Activated CD8-positive, alpha-beta T cell treated with anti-CD3 and anti-CD28 coated beads for 36 hours (primary cell): ENCODE measurements at regions of chr22 and their contacts with region 1.

Region 1: GRCh38 chr22:40509401-40510134 is 127.0 kb downstream of the MRTFA start:
- DNase-seq: no peak
- ATAC-seq: no peak
- H3K4me3 Mint-ChIP-seq: no peak overlapping the region
- H3K27ac Mint-ChIP-seq: no peak overlapping the region
- H3K4me1 Mint-ChIP-seq: peaks cover 31% of the 10 kb centered on the region
- H3K27me3 Mint-ChIP-seq: no peaks in the 10 kb centered on the region
- CTCF ChIP-seq: no peak

Region 2: GRCh38 chr22:40326905-40327735 is 182.4 kb before region 1 on chr22:
- CTCF ChIA-PET with region 1: no interaction called
- POLR2A ChIA-PET with region 1: no interaction called
- intact Hi-C with region 1: no loop called
- DNase-seq: peak; percentile 29
- ATAC-seq: peak; percentile 9
- H3K4me3 Mint-ChIP-seq: peak overlapping the region; percentile 22
- H3K27ac Mint-ChIP-seq: peak overlapping the region; percentile 87
- H3K4me1 Mint-ChIP-seq: peaks cover 93% of the 10 kb centered on the region
- H3K27me3 Mint-ChIP-seq: no peaks in the 10 kb centered on the region
- CTCF ChIP-seq: no peak

Region 3: GRCh38 chr22:40422481-40423309 is 86.9 kb before region 1 on chr22:
- CTCF ChIA-PET with region 1: no interaction called
- POLR2A ChIA-PET with region 1: no interaction called
- intact Hi-C with region 1: no loop called
- DNase-seq: no peak
- ATAC-seq: no peak
- H3K4me3 Mint-ChIP-seq: no peak overlapping the region
- H3K27ac Mint-ChIP-seq: peak overlapping the region; percentile 56
- H3K4me1 Mint-ChIP-seq: peaks cover 11% of the 10 kb centered on the region
- H3K27me3 Mint-ChIP-seq: no peaks in the 10 kb centered on the region
- CTCF ChIP-seq: no peak

Region 4: DNA sequence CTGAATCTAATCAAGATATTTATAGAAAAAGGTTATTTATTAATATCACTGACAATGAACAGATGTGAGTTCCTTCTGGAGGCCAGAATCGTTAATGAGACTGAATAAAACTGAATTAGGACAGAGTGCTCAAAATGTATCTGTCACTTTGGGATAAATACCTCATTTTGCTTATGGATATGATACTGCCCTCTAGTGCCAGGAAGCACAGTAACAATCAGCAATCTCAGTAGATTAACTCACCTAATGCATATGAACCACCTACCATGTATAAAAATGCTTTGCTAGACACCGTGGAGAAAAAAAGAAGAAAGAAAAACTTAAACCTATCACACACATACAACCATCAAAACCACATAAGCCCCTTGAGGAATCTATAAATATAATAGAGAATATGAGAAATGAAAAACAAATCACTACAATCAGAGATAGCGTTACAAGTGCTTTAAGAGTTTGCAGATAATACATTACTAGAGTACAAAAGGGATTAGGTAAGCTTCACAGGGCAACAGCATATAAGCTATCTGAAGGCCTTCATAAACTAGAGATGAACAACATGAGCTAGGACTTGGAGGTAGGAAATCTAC is 21.8 kb before region 1 on chr22:
- CTCF ChIA-PET with region 1: interaction called, 11 read pairs
- POLR2A ChIA-PET with region 1: no interaction called
- intact Hi-C with region 1: no loop called
- DNase-seq: no peak
- ATAC-seq: peak; percentile 57
- H3K4me3 Mint-ChIP-seq: no peak overlapping the region
- H3K27ac Mint-ChIP-seq: peak overlapping the region; percentile 25
- H3K4me1 Mint-ChIP-seq: peaks cover 45% of the 10 kb centered on the region
- H3K27me3 Mint-ChIP-seq: no peaks in the 10 kb centered on the region
- CTCF ChIP-seq: peak; percentile 94

Region 5: DNA sequence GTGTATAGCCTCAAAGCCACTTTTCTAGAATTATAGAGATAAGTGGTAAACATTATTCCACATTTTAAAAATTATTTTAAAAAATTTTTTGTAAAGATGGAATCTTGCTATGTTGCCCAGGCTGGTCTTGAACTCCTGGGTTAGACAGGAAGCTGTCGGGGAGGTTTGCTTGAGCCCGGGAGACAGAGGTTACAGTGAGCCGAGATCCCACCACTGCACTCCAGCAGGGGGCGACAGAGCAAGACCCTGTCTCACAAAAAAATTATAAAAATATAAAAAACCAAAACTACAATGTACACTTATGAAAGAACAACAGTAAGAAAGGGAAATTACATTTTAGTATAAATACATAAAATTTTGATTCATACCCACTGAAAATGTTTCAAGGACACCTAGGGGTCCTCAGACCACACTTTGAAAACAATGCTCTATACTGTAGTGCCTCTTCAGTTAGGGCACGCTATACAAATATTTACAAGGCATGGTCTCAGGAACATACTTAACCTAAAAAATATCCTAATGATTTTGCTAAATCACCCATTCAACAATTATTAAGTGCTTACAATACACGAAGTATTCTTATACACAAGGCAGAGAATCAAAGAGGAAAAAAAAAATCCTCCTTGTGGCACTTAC is 15.8 kb after region 1 on chr22:
- CTCF ChIA-PET with region 1: interaction called, 10 read pairs
- POLR2A ChIA-PET with region 1: no interaction called
- intact Hi-C with region 1: no loop called
- DNase-seq: peak; percentile 85
- ATAC-seq: peak; percentile 69
- H3K4me3 Mint-ChIP-seq: no peak overlapping the region
- H3K27ac Mint-ChIP-seq: no peak overlapping the region
- H3K4me1 Mint-ChIP-seq: peaks cover 43% of the 10 kb centered on the region
- H3K27me3 Mint-ChIP-seq: no peaks in the 10 kb centered on the region
- CTCF ChIP-seq: peak; percentile 91

Region 6: DNA sequence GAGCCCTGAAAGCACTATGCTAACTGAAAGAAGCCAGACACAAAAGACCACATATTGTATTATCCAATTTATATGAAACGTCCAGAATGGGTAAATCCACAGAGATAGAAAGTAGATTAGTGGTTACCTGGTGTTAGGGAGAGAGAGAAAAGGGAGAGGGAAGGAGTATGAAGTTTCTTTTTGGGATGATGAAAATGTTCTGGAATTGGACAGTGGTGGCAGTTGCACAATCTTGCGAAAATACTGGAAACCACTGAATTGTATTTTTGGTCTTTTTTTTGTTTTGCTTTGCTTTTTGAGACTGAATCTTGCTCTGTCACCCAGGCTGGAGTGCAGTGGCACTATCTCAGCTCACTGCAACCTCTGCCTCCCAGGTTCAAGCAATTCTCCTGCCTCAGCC is 63.4 kb after region 1 on chr22:
- CTCF ChIA-PET with region 1: no interaction called
- POLR2A ChIA-PET with region 1: no interaction called
- intact Hi-C with region 1: loop called (anchors 10 kb)
- DNase-seq: no peak
- ATAC-seq: no peak
- H3K4me3 Mint-ChIP-seq: no peak overlapping the region
- H3K27ac Mint-ChIP-seq: no peak overlapping the region
- H3K4me1 Mint-ChIP-seq: peaks cover 6% of the 10 kb centered on the region
- H3K27me3 Mint-ChIP-seq: no peaks in the 10 kb centered on the region
- CTCF ChIP-seq: no peak